ENCODE measurements at regions of chr20 and their contacts with region 1.

Region 1: DNA sequence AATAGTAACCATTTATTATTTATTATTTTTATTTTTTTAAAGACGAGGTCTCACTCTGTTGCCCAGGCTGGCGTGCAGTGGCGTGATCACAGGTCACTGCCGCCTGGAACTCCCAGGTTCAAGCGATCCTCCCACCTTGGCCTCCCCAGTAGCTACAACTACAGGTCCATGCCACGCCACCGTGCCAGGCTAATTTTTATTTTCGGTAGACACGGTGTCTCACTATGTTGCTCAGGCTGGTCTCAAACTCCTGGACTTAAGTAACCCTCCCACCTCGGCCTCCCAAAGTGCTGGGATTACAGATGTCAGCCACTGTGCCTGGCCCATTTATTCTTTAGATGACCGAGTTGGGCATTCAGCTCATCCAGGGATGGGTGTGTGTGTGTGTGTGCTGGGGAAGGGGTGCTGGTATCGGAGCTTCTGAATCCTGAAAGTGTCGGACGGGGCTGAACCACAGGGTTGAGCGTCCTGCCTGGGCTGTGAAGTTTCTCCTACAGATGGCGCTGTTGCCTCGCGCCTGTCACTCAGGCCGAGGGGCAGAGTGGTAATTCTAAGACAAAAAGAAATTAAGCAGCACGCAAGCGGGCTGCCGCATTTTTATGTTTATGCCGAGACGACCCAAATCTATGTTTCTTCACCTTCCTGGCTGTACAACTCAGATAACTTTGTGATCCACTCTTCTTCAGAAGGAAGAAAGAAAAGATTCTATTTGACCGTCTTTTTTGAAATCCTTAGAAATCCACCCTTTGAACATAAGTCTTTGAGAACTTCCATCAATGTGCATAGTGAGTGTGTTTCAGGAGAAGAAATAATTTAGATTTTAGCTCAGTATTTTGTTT is 252.8 kb downstream of the CDH26 start:
- DNase-seq: peak; percentile 70
- H3K4me3 ChIP-seq: no peak overlapping the region
- H3K27ac ChIP-seq: no peak overlapping the region
- H3K4me1 ChIP-seq: peaks cover 0 to 31% of the 10 kb centered on the region in 2 experiments; a peak in 1 of 4 replicates
- H3K27me3 ChIP-seq: no peaks in the 10 kb centered on the region
- CTCF ChIP-seq: peak; percentile 30; the same call in 1 of the 2 replicates
- EP300 ChIP-seq: no peak
- RAD21 ChIP-seq: peak; percentile 92

Region 2: DNA sequence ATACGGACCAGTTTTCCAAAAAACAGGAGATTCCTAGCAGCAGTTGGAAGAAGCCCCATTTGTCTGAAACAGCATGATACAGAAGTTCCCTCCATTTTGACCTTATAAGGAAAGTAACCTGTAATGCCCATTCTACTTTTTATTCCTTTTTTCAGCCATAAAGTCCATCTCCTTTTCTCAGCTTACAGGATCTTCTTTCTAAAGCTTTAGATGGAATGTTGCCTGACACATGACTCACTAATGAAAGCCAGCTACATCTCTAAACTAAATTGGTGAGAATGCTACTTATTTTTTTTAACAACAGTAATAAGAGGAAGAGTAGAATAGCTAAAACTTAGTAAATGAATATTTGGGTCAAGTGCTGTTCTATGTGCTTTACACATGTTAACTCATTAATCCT is 18.7 kb before region 1 on chr20:
- CTCF ChIA-PET with region 1: interaction called, 15 read pairs
- POLR2A ChIA-PET with region 1: no interaction called
- DNase-seq: no peak
- H3K4me3 ChIP-seq: no peak overlapping the region
- H3K27ac ChIP-seq: no peak overlapping the region
- H3K4me1 ChIP-seq: no peaks in the 10 kb centered on the region
- H3K27me3 ChIP-seq: no peaks in the 10 kb centered on the region
- CTCF ChIP-seq: no peak
- EP300 ChIP-seq: no peak
- RAD21 ChIP-seq: no peak

Region 3: DNA sequence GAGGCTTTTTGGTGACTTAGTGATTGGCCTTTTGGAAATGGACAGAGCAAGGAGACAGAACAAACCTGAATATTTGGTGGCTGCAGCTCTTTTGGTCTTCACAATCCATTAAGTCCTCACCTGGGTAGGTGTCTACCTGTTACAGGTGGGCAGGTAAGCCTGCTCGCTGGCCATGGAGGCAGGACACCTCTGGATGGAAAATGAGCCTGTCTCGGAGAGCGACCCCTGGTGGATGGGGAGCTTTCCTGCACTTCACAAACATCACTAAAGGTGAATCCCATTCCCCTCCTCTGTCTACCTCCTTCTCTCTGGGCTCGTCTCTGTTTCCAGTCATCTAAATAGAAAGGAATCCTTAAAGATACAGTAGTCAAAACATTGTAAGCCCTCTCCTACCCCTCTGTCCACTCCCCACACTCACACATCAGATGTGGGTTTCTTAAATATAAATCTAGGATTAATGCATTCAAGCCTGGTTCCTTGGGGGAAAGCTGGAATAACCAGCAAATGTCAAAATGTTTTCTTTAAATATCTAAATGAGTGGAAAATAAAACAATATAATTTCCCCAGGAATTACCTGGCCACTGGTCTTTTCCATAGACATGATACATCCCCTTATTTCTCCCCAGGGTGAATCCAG is 52.1 kb after region 1 on chr20:
- CTCF ChIA-PET with region 1: interaction called, 12 read pairs
- POLR2A ChIA-PET with region 1: no interaction called
- DNase-seq: peak; percentile 42
- H3K4me3 ChIP-seq: no peak overlapping the region; a peak in 1 of 4 replicates
- H3K27ac ChIP-seq: no peak overlapping the region
- H3K4me1 ChIP-seq: peaks cover 0 to 3% of the 10 kb centered on the region in 2 experiments; a peak in 1 of 4 replicates
- H3K27me3 ChIP-seq: no peaks in the 10 kb centered on the region
- CTCF ChIP-seq: peak; percentile 34; the same call in 1 of the 2 replicates
- EP300 ChIP-seq: no peak
- RAD21 ChIP-seq: peak; percentile 19; the same call in 1 of the 2 replicates

Region 4: GRCh38 chr20:60365056-60365666 is 154.2 kb after region 1 on chr20:
- CTCF ChIA-PET with region 1: interaction called, 81 read pairs
- POLR2A ChIA-PET with region 1: no interaction called
- DNase-seq: peak; percentile 54
- H3K4me3 ChIP-seq: no peak overlapping the region
- H3K27ac ChIP-seq: peak overlapping the region in 1 of 2 experiments; percentile 74; a peak in 2 of 4 replicates
- H3K4me1 ChIP-seq: peaks cover 0 to 17% of the 10 kb centered on the region in 2 experiments; a peak in 2 of 4 replicates
- H3K27me3 ChIP-seq: no peaks in the 10 kb centered on the region
- CTCF ChIP-seq: no peak
- EP300 ChIP-seq: no peak
- RAD21 ChIP-seq: peak; percentile 73

Region 5: DNA sequence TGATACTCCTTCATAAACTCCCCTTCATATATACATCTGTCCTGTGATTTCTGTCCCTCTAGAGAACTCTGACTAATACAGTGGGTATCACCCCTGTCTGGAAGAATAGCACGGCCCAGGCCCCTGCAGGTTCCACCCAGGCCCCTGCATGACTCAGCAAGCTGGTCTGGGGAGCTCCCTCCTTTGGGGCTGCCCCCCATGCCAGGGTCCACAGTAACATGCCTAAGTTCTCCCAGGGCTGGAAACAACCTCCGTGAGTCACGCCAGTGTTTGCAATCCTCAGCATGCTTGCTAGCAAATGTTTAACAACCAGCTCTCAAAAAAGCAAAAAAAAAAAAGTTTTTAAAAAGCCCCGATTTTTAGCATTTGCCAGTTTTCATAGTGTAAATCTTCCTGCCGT is 906.7 kb after region 1 on chr20:
- CTCF ChIA-PET with region 1: interaction called, 30 read pairs
- POLR2A ChIA-PET with region 1: no interaction called
- DNase-seq: no peak
- H3K4me3 ChIP-seq: no peak overlapping the region
- H3K27ac ChIP-seq: no peak overlapping the region
- H3K4me1 ChIP-seq: no peaks in the 10 kb centered on the region
- H3K27me3 ChIP-seq: no peaks in the 10 kb centered on the region
- CTCF ChIP-seq: no peak
- EP300 ChIP-seq: no peak
- RAD21 ChIP-seq: no peak

Region 6: DNA sequence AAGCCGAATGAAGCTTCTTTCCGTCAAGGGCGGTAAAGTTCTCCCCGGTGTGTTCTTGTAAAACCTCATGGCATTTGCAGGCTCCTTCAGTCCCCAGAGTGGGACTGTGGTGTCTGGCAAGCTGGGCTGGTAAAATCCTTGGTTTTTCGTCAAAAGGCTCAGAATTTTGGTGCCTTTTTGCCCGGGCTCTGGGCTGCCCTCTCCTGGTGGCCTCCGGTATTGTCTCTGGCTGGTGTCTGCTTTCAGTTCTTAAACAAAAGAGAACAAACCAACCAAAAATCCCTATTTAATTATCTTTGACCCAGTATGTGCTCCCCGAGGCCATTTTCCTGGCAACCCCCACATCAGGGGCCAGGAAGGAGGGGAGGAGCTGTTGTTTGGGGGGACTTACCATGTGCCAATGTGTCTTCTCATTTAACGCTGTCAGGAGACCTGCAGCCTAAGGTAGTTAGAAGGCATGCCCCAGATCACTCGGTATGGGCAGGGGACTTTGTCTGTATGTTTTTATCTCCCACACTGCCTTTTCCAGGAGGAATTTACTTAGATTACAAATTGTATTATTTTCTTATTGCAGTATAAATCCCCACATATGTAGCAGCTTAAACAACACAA is 1052.2 kb after region 1 on chr20:
- CTCF ChIA-PET with region 1: interaction called, 16 read pairs
- POLR2A ChIA-PET with region 1: no interaction called
- DNase-seq: peak; percentile 53
- H3K4me3 ChIP-seq: peak overlapping the region in 1 of 2 experiments; percentile 19; a peak in 1 of 4 replicates
- H3K27ac ChIP-seq: no peak overlapping the region
- H3K4me1 ChIP-seq: no peaks in the 10 kb centered on the region
- H3K27me3 ChIP-seq: no peaks in the 10 kb centered on the region
- CTCF ChIP-seq: peak; percentile 51
- EP300 ChIP-seq: no peak
- RAD21 ChIP-seq: peak; percentile 45; the same call in 1 of the 2 replicates

Measured in SK-N-SH (cell line).